ENCODE measurements at regions of chr21 and their contacts with region 1.

Region 1: DNA sequence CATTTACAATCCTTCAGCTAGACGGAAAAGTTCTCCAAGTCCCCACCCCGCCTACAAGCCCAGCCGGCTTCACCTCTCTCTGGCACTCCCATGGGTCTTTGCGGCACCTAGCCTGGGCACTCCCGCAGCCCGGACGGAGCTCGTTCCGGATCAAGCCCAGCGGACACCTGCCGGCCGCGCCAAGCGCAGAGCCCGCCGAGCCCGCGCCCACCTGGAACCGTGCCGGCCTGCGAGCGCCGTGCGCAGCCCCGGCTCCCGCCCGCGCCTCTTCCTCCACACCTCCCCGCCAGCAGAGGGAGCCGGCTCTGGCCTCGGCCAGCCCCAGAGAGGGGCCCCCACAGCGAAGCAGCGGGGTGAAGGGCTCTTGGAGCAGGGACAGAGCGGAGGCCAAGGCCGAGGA is 50.0 kb upstream of the KRTAP19-8 start:
- DNase-seq: no peak
- H3K4me3 Mint-ChIP-seq: no peak overlapping the region
- H3K27ac Mint-ChIP-seq: no peak overlapping the region
- H3K4me1 Mint-ChIP-seq: peaks cover 16% of the 10 kb centered on the region
- H3K27me3 Mint-ChIP-seq: peaks cover 21% of the 10 kb centered on the region

Region 2: GRCh38 chr21:30502041-30502440 is 586.3 kb before region 1 on chr21 and contains the start of gene KRTAP19-5:
- CTCF ChIA-PET with region 1: interaction called, 23 read pairs
- DNase-seq: no peak
- H3K4me3 Mint-ChIP-seq: no peak within 1 kb of the TSS
- H3K27ac Mint-ChIP-seq: no peak within 1 kb of the TSS
- H3K4me1 Mint-ChIP-seq: no peaks in the 10 kb centered on the region
- H3K27me3 Mint-ChIP-seq: no peaks in the 10 kb centered on the region

Region 3: GRCh38 chr21:30831194-30831765 is 257.0 kb before region 1 on chr21:
- CTCF ChIA-PET with region 1: interaction called, 15 read pairs
- DNase-seq: peak; percentile 65
- H3K4me3 Mint-ChIP-seq: no peak overlapping the region
- H3K27ac Mint-ChIP-seq: no peak overlapping the region
- H3K4me1 Mint-ChIP-seq: no peaks in the 10 kb centered on the region
- H3K27me3 Mint-ChIP-seq: no peaks in the 10 kb centered on the region

Measured in activated naive CD4-positive, alpha-beta T cell treated with anti-CD3 and anti-CD28 coated beads, Interleukin-2, amount 10 ng/mL, durations not matched to agents 7 days and 5 days (primary cell).